Right ventricle myocardium inferior (tissue), 1 donor: ENCODE measurements at regions of chr5 and their contacts with region 1.

Region 1: DNA sequence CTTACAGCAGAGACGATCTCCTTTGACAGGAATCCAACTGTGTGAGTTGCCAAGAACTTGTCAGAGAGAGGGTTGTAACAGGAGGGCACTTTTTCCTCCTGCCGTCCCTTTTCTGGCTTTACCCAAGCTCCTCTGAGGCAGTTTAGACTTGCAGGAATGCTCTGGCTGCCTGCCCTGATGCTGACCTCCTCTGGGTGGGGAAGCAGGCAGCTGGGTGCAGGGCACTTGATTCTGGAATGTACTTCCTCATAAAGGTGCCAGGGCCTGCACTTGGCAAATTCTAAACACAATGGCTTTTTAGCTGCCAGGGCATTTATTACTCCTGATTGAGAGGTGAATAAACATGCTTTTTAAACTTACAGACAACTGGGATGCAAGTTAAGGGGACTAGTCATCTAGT is 190.4 kb downstream of the EPB41L4A start:
- DNase-seq: peak; percentile 87
- ATAC-seq: peak; percentile 97

Region 2: DNA sequence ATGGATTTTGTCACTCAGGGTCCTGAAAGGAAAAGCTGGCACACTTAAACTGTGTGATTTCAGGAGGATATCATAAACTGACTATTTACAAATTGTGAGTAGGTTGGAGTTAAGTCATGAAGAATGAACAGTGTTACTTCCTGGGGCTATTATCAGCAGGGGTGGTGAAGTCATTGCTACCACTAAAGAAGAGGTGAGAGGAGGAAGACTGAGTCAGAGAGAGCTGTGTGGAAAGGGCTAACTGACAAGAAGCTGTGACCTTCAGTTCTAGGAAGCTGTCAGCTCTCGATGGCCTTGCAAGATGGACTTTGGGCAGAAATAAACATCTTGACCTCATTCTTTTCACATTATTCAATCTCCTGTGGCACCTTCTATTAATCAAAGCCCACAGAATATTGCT is 644.0 kb before region 1 on chr5:
- intact Hi-C with region 1: no loop called
- DNase-seq: no peak
- ATAC-seq: no peak

Region 3: DNA sequence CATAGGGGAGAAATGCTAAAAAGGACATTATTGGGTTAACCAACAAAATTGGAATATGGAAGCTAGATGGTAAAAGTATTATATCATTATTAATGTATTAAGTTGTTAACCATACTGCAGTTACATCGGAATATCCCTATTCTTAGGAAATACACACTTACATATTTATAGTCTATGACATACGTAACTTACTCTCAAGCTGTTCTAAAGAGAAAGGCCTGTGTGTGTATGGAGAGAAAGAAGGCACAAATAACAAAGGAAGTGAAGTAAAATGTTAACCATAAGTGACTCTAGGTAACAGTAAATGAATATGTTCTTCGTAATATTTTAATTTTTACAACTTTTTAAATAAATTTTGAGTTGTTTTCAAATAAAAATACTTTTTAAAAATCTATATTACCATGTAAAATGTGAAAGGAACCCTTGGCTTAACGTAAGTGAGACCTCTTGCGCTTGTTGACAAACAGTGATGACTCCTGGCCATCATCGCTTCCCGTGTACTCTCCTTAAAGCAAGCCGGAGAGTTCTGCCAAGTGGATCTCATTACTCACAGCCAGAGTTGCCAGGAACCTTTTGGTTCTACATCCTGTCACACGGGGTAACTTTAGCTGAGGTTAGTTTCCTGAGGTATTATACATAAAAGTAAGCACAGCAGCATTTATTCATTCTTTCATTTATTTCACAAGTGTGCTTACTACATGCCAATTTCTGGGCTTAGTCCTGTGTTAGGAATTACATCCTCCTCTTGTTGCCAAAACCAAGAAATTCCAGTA is 25.0 kb after region 1 on chr5:
- intact Hi-C with region 1: no loop called
- DNase-seq: no peak
- ATAC-seq: peak; percentile 92

Region 4: DNA sequence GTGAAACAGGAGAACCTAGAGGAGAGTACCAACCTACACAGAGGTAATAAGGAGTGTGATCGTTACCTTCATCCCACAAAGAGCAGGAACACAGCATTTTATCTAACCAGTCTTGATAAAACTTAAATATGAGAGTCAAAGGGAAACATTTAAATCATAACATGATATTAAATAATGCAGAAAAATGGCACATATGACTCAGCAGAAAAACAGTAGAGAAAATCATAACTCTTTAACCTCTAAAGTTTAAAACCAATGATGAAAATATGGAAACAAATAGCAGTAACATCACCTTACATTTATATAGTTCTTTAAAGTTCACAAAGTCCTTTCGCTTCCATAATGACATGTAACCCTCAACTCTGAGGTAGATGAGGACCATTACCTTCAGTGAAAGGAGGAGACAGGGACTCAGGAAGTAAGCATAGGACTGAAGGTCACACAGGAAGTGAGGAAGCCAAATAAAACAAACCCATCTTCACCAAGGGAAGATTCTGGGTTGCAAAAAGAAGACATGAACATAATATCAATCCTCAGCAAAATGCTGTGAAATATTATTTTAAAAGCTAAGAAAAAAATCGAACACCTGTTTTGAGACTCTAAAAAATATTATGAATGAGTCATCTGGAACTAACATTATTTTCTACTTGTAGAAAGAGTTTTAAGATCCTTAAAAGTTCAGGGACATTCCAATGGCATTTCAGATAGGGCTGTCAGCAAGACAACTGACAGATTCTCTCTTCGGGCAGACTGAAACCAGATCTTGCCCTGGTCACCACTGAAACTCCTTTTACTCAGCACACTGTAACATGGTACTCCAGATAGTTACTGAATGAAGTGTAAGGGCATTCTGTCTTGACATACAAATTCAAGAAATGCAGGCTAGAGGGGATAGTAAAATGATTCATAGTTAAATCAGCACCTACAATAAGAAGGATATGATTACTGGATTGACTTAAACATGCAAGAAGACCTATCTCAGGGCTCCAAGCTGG is 41.9 kb after region 1 on chr5:
- intact Hi-C with region 1: loop called (anchors 1 kb)
- DNase-seq: no peak
- ATAC-seq: no peak

Region 5: DNA sequence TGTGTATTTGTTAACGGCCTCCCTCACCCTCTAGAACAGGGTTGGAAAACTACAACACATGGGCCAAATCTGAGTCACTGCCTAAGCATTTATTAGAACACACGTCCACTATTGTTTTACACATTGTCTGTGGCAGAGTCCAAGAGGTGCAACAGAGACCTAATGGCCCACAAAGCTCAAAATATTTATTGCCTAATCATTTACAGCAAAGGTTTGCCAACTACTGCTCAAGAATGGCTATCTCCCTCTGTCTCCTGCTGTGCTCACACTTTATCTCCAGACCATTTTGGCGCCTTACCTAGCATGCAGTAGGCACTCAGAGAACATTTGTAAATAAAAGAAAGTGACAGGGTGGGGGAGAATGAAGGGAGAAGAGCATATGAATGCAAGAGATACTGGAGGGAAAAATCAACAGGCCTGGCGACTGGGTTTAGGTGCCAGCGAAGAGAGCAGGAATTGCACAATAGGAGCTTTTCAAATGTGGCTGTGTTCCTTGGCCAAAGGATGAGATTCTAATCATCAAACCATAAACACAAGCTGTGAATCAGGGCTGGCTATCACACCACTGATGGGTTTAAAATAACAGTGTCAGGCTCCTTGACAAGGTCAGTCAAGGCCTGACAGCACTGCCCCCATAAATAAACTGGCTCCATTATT is 110.1 kb after region 1 on chr5:
- intact Hi-C with region 1: loop called (anchors 5 kb)
- DNase-seq: no peak
- ATAC-seq: peak; percentile 83